Left ventricle myocardium inferior (tissue), 1 donor: ENCODE measurements at regions of chr6 and their contacts with region 1.

Region 1: DNA sequence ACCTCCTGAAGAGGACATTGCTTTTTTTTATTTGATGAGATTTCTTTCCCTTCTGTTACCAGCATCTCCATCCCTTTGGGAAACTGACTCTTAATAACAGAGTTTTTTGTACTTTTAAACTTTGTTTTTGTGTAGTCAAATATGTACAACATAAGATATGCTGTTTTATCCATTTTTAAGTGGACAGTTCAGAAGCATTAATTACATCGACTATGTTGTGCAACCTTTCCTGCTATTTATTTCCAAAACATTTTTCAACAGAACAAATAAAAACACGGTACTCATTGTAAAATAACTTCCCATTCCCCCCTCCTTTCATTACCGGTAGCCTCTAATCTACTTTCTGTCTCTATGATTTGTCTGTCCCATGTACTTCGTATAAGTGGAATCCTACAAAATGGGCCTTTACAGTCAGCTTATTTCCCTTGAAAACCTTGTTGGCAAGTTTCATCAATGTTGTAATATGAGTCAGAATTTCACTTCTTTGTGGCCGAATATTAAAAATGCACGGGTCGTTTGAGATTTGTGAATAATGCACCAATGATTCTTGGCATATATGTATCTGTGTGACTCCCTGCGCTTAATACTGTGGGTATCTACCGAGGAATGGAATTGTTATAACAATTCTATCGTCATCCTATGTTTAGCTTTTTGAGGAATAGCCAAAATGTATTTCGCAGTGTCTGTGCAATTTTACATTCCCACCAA is 11.1 kb upstream of the RIPK1 start:
- DNase-seq: no peak
- H3K4me3 ChIP-seq: no peak overlapping the region
- H3K27ac ChIP-seq: no peak overlapping the region
- H3K4me1 ChIP-seq: peaks cover 25% of the 10 kb centered on the region
- H3K27me3 ChIP-seq: no peaks in the 10 kb centered on the region
- CTCF ChIP-seq: no peak

Region 2: DNA sequence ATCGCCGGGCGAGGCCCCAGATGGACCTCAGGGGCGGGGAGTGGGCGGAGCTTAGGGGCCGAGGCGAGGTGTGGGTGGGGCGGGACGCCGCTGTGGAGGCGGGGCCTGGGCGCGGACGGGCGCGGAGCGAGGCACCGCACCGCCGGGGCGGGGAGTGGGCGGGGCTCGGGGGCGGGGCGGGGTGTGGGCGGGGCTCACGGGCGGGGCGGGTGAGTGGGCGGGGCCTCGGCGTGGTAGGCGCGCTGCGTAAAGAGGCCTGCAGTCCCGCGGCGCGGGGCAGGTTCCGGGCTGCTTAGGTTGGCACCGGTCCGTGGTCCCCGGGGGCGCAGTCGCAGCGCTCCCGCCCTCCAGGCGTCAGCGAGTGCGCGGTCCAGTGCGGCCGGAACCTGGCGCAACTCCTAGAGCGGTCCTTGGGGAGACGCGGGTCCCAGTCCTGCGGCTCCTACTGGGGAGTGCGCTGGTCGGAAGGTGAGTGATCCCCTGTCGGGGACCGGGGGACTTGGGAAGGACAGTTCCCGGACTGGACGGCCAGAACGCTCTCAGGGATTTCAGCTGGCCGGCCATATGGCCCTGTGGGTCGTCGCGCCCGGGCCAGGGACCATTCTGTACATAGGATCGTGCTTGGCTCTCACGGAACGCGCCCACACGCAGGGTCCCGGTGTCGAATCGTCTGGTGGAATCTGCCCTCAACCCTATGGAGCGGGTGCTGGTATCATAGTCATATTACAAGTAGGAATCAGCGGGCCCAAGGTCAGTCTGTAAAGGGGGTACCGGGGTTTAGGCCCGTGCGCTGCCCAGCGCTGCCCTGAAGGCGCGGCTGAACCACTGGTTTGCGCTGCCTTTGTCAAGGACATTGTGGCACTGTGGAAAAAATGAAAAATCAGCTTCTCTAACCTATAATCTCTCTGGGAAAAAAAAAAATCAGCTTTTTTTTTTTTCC is 57.3 kb before region 1 on chr6 and contains the start of gene NQO2:
- intact Hi-C with region 1: loop called (anchors 5 kb)
- DNase-seq: peak; percentile 95
- H3K4me3 ChIP-seq: peak within 1 kb of the TSS; percentile 82
- H3K27ac ChIP-seq: peak within 1 kb of the TSS; percentile 93
- H3K4me1 ChIP-seq: peaks cover 37% of the 10 kb centered on the region
- H3K27me3 ChIP-seq: no peaks in the 10 kb centered on the region
- CTCF ChIP-seq: peak; percentile 30
- total RNA-seq, gene NQO2: 51.1 TPM